PC-9 (cell line): ENCODE measurements at regions of chr7 and their contacts with region 1.

Region 1: DNA sequence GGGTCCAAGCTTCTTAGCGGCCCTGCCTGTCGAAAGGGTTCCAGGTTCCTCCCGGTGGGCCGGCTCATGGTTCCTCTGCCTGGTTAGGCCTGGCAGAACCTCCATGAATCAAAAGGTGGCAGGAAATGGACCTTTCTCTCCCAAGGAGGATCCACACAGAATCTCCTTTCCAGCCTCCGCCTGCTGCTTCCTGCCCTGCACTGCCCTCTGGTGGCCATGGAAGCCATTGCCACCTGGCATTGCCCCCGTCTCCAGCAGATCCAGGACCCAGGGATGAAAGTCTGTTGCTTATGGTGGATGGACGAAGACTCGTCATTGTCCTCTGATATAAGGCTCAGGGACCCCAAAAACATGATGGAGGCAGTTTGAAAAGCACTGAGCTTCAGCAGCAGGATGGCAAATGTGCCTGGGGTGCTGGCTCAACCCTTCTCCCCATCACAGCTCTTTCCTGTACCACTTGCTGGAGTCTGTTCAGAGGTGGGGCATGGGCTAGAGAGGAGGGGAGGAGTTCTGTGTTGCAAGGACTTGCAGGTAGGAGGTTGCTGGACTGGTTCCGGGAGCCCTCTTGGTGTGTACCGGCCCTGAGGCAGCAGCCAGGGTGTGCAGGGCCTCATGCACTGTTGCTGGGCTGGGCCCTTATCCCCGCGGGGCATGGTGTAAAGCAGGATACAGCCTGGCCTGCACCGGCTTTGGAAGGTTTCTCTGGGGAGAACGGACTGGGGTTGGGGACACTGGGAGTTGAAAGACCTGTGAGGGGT is 11.3 kb upstream of the INMT start:
- DNase-seq: peak; percentile 63 to 85
- H3K4me3 ChIP-seq: no peak overlapping the region
- H3K27ac ChIP-seq: no peak overlapping the region
- H3K4me1 ChIP-seq: 0 out of 2 replicates have a peak, but pooled peaks cover 4% of the 10 kb centered on the region
- H3K27me3 ChIP-seq: peaks cover 35% of the 10 kb centered on the region
- CTCF ChIP-seq: peak; percentile 100

Region 2: DNA sequence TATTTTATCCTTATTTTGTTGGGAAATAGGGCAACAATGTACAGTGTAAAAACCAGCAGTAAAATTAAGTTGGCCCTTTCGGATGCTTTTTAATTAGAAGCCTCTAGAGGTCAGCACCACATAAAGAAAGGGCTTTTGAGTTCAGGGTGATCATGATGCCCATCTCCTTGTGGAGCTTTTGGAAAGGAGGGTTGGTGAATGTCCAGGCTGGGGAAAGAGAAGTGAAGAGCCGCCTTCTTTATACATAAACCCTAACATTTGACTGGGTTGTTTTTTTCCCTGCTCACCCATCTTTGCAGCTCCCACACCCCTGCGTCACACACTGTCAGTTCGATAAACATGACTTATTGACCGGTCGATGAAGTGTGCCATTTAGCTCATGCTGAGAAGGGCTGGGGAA is 576.0 kb before region 1 on chr7:
- CTCF ChIA-PET with region 1: no interaction called
- POLR2A ChIA-PET with region 1: no interaction called
- intact Hi-C with region 1: loop called (anchors 10 kb)
- DNase-seq: peak; percentile 32 to 68
- H3K4me3 ChIP-seq: no peak overlapping the region
- H3K27ac ChIP-seq: no peak overlapping the region
- H3K4me1 ChIP-seq: peaks cover 52% of the 10 kb centered on the region
- H3K27me3 ChIP-seq: no peaks in the 10 kb centered on the region
- CTCF ChIP-seq: peak; percentile 86

Region 3: DNA sequence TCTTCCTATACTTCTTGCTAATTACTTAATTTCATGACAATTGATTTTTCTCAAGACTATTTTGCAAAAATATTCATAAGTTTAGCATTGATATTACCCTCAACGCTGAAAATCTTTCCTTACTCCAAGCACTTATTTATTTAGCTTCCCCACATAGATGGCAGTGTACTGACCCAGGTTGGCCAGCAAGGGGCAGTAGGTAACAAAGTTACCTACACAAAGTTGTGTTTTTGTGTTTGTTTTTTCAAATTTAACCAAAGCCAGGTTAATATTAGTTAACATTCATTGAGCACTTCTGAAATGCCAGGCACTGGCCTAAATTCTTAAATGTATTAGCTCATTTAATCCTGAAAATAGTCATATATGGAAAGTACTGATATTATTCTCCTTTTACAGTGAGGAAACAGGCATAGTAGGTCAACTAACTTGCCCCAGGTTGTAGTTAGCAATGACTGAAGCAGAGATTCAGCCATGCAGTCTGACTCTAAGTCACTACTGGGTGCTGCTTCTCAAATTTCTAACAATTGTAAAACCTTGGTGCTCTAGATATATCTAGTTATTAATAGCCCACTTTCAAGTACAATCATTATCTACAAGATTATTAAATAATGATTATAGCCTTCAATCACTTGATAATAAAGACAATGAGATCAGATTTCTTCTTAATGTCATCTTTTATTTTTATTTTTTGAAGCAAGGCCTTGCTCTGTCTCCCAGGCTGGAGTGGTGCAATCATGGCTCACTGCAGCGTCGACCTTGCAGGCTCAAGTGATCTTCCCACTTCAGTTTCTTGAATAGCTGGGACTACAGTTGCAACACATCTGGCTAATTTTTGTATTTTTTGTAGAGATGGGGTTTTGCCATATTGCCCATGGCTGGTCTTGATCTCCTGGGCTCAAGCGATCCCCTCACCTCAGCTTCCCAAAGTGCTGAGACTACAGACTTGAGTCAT is 230.2 kb before region 1 on chr7:
- CTCF ChIA-PET with region 1: no interaction called
- POLR2A ChIA-PET with region 1: no interaction called
- intact Hi-C with region 1: loop called (anchors 1 kb)
- DNase-seq: peak in 1 of 2 experiments; percentile 41
- H3K4me3 ChIP-seq: no peak overlapping the region
- H3K27ac ChIP-seq: no peak overlapping the region
- H3K4me1 ChIP-seq: peaks cover 36% of the 10 kb centered on the region
- H3K27me3 ChIP-seq: no peaks in the 10 kb centered on the region
- CTCF ChIP-seq: peak; percentile 94

Region 4: GRCh38 chr7:30625283-30625682 is 115.3 kb before region 1 on chr7:
- CTCF ChIA-PET with region 1: no interaction called
- POLR2A ChIA-PET with region 1: interaction called, 3 read pairs
- intact Hi-C with region 1: loop called (anchors 1 kb)
- DNase-seq: peak in 1 of 2 experiments; percentile 41
- H3K4me3 ChIP-seq: no peak overlapping the region
- H3K27ac ChIP-seq: no peak overlapping the region
- H3K4me1 ChIP-seq: no peaks in the 10 kb centered on the region
- H3K27me3 ChIP-seq: no peaks in the 10 kb centered on the region
- CTCF ChIP-seq: peak; percentile 20; the same call in 1 of the 2 replicates

Region 5: DNA sequence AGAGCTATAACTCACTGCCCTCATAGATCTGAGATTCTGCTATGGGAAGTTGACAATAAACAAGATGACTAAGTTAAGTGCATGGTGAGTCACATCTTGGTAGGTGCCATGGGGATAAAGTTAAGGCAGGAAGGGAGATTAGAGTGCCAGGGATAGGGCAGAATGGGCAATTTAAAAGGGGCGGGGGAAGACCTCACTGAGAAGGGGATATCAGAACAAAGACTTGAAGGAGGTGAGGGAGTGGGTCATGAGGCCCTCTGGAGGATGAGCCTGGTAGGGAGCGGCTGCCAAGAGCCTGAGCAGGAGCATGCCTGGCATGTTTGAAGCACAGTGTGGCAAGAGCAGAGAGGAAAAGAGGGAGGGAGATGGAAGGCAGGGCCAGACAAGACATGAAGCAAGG is 23.4 kb before region 1 on chr7:
- CTCF ChIA-PET with region 1: no interaction called
- POLR2A ChIA-PET with region 1: no interaction called
- intact Hi-C with region 1: no loop called
- DNase-seq: peak; percentile 25 to 74
- H3K4me3 ChIP-seq: no peak overlapping the region
- H3K27ac ChIP-seq: no peak overlapping the region
- H3K4me1 ChIP-seq: peaks cover 4% of the 10 kb centered on the region
- H3K27me3 ChIP-seq: peaks cover 19% of the 10 kb centered on the region; the same call in 1 of the 2 replicates
- CTCF ChIP-seq: peak; percentile 37; the same call in 1 of the 2 replicates

Region 6: DNA sequence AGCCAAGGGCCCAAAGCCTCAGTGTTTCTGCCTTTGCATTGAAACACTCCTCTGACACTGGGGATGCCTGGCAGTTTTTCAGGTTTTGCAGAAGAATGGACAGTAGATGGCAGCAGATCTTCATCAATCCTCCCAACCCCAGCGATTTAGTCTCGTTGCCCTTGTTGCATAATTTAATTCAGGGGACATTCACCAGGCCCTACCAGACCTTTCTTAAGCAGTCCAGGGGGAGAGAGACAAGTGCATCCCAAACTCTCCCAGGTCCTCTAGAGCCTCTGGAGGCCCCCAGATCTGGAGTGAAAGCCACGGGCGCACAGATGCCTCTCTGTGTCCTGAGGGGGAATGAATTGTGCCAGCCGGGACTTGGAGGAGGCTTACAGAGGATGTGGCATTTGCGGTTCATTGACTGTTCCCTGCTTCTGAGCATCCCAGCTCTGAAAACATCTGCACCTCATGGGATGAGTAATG is 60.2 kb after region 1 on chr7:
- CTCF ChIA-PET with region 1: interaction called, 3 read pairs
- POLR2A ChIA-PET with region 1: no interaction called
- intact Hi-C with region 1: loop called (anchors 1 kb)
- DNase-seq: peak; percentile 52 to 61
- H3K4me3 ChIP-seq: no peak overlapping the region
- H3K27ac ChIP-seq: no peak overlapping the region
- H3K4me1 ChIP-seq: peaks cover 56% of the 10 kb centered on the region
- H3K27me3 ChIP-seq: no peaks in the 10 kb centered on the region
- CTCF ChIP-seq: peak; percentile 91

Region 7: GRCh38 chr7:31122649-31123058 is 382.1 kb after region 1 on chr7:
- CTCF ChIA-PET with region 1: no interaction called
- POLR2A ChIA-PET with region 1: no interaction called
- intact Hi-C with region 1: loop called (anchors 1 kb)
- DNase-seq: peak; percentile 61 to 69
- H3K4me3 ChIP-seq: no peak overlapping the region
- H3K27ac ChIP-seq: no peak overlapping the region
- H3K4me1 ChIP-seq: no peaks in the 10 kb centered on the region
- H3K27me3 ChIP-seq: peaks cover 65% of the 10 kb centered on the region
- CTCF ChIP-seq: peak; percentile 86

Region 8: DNA sequence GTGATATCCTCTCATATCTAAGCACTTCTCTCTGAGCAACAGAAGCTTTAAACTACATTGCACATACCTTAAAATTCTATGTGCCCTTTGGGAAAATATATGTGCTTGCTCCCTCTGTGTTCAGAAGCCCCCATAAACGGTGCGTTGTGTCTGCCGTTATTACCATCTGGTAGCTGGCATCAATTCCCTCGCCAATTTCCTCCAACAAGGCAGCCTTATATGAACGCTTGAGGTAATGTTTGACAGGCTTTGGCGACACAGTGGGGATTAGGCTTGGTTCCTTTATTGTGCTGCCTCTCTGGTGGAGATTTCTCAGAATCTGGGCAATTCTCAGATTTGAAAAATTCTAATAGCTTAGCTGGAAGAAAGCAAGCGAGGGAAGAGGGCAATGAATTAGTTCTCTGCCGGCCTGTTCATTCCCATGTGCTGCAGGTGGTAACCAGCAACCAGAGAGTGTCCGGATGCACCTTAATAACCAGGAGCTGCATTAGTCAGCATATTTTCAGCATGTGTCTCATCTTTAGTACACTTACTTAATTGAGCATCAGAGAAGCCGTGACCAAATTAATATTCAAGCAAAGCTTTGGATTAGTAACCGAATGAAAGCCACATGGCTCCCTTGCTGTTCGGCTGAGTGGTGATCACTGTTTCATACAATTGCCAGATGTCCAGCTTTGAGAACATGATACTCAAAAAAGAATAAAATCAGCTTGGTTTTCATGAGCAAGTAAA is 939.1 kb after region 1 on chr7:
- CTCF ChIA-PET with region 1: no interaction called
- POLR2A ChIA-PET with region 1: no interaction called
- intact Hi-C with region 1: no loop called
- DNase-seq: no peak
- H3K4me3 ChIP-seq: no peak overlapping the region
- H3K27ac ChIP-seq: no peak overlapping the region
- H3K4me1 ChIP-seq: no peaks in the 10 kb centered on the region
- H3K27me3 ChIP-seq: peaks cover 22% of the 10 kb centered on the region
- CTCF ChIP-seq: no peak